ENCODE measurements at regions of chr19 and their contacts with region 1.

Region 1: GRCh38 chr19:17996826-17997316 is 11.1 kb upstream of the ARRDC2 start:
- DNase-seq: peak; percentile 84 to 91
- H3K4me3 ChIP-seq: no peak overlapping the region
- H3K27ac ChIP-seq: no peak overlapping the region
- H3K4me1 ChIP-seq: peaks cover 0 to 19% (median 10%) of the 10 kb centered on the region in 4 donors
- H3K27me3 ChIP-seq: peaks cover 0 to 28% of the 10 kb centered on the region in 2 donors
- CTCF ChIP-seq: peak; percentile 97 to 98

Region 2: DNA sequence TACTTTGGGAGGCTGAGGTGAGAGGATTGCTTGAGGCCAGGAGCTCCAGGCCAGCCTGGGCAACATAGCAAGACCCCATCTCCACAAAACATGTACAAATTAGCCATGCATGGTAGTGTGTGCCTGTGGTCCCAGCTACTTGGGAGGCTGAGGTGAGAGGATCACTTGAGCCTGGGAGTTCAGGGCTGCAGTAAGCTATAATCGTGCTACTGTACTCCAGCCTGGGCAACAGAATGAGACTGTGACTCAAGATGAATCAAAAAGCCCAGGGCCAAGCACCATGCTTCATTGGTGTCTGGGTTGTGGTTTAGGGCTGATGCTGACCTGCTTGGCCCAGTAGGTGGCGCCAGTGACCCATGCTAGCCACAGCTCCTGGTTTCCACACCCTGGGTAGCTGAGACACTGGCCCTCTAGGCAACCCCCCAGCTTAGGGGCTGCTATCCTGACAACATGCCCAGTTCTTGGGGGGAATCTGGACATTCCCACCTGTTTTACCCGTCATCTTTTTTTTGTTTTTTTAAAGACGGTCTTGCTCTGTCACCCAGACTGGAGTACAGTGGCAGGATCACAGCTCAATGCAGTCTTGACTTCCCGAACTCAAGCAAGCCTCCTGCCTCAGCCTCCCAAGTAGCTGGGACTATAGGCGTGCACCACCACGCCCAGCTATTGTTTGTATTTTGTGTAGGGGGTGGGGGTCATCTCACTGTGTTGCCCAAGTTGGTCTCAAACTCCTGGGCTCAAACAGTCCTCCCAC is 58.6 kb before region 1 on chr19:
- intact Hi-C with region 1: loop called (anchors 2 kb)
- DNase-seq: peak; percentile 71 to 82
- H3K4me3 ChIP-seq: no peak overlapping the region
- H3K27ac ChIP-seq: no peak overlapping the region
- H3K4me1 ChIP-seq: peaks cover 0 to 18% (median 12%) of the 10 kb centered on the region in 4 donors
- H3K27me3 ChIP-seq: no peaks in the 10 kb centered on the region
- CTCF ChIP-seq: peak; percentile 93 to 94

Region 3: GRCh38 chr19:18058208-18059030 is 61.5 kb after region 1 on chr19:
- intact Hi-C with region 1: no loop called
- DNase-seq: peak; percentile 69 to 88
- H3K4me3 ChIP-seq: peak overlapping the region in 1 of 2 donors; percentile 18
- H3K27ac ChIP-seq: peak overlapping the region; percentile 78 to 79
- H3K4me1 ChIP-seq: peaks cover 0 to 25% (median 11%) of the 10 kb centered on the region in 4 donors
- H3K27me3 ChIP-seq: peaks cover 0 to 4% of the 10 kb centered on the region in 2 donors
- CTCF ChIP-seq: peak; percentile 93 to 98

Region 4: GRCh38 chr19:18091217-18091608 is 94.3 kb after region 1 on chr19:
- intact Hi-C with region 1: no loop called
- DNase-seq: peak; percentile 57 to 83
- H3K4me3 ChIP-seq: no peak overlapping the region
- H3K27ac ChIP-seq: peak overlapping the region; percentile 42 to 46
- H3K4me1 ChIP-seq: peaks cover 0 to 37% (median 16%) of the 10 kb centered on the region in 4 donors
- H3K27me3 ChIP-seq: no peaks in the 10 kb centered on the region
- CTCF ChIP-seq: no peak